Ovary (tissue), 10 donors: ENCODE measurements at regions of chr15 and their contacts with region 1.

Region 1: DNA sequence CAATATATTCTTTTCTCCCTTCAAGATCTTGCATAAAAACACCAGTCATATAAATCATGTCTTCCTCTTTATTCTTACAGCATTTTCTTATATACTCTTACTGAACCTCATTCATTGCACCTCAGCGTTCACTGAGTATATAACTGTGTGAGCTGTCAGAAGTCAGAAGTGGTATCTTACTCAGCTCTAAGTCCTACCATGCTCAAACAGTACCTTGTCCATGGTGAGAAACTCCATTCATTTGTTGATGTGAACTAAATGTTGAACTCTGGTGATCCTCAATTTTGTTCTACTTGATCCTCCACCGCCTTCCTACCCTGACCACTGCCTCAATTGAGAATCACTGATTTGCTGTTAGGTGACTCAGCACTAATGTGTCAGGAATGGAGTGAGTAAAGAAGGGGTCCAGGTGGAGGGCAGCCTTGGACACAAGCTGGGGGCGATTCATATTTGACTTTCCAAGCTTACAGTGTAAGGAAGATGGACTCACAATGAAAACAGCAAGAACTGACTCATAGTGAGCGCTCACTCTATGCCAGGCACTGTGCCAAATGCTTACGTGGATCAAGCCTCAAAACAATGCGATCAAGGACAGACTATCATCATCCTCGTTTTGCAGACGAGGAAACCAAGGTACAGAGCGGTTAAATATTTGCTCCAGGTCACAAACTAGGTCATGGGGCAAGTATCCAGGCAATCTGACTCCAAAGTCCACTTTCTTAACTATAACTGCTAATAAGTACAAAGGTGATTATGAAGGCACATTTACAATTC is 13.5 kb upstream of the ZFYVE19 start:
- DNase-seq: peak in 4 of 5 donors; percentile 48 to 62 (median 52)
- H3K4me3 ChIP-seq: no peak overlapping the region
- H3K27ac ChIP-seq: no peak overlapping the region
- H3K4me1 ChIP-seq: peaks cover 5% of the 10 kb centered on the region
- H3K27me3 ChIP-seq: no peaks in the 10 kb centered on the region
- CTCF ChIP-seq: no peak
- EP300 ChIP-seq: no peak
- POLR2A ChIP-seq: no peak

Region 2: DNA sequence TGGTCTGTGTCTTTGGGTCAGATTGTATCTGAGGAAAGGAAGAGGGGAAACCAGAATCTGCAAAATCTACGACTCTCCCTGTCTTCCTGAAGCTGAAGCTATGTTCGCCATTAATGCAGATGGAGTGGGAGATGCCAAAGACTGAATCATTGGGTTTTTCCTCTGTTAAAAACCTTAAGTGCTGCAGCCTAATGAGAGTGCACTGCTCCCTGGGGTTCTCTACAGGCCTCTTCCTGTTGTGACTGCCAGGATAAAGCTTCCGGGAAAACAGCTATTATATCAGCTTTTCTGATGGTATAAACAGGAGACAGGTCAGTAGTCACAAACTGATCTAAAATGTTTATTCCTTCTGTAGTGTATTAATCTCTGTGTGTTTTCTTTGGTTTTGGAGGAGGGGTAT is 62.4 kb before region 1 on chr15:
- intact Hi-C with region 1: no loop called
- DNase-seq: no peak
- H3K4me3 ChIP-seq: no peak overlapping the region
- H3K27ac ChIP-seq: no peak overlapping the region
- H3K4me1 ChIP-seq: no peaks in the 10 kb centered on the region
- H3K27me3 ChIP-seq: no peaks in the 10 kb centered on the region
- CTCF ChIP-seq: no peak
- EP300 ChIP-seq: no peak
- POLR2A ChIP-seq: no peak

Region 3: GRCh38 chr15:40807028-40807887 is 13.9 kb after region 1 on chr15 and contains the starts of genes DNAJC17 and ZFYVE19:
- intact Hi-C with region 1: loop called in 1 of 4 experiments (anchors 1 kb)
- DNase-seq: peak; percentile 91 to 95 (median 94)
- H3K4me3 ChIP-seq: peak within 1 kb of the TSS; percentile 78
- H3K27ac ChIP-seq: peak within 1 kb of the TSS; percentile 85 to 92
- H3K4me1 ChIP-seq: peaks cover 5% of the 10 kb centered on the region
- H3K27me3 ChIP-seq: no peaks in the 10 kb centered on the region
- CTCF ChIP-seq: no peak
- EP300 ChIP-seq: no peak
- POLR2A ChIP-seq: no peak
- total RNA-seq, gene DNAJC17: 10.5 to 39.1 (median 31.7) TPM
- total RNA-seq, gene ZFYVE19: 15.9 to 31.0 (median 17.4) TPM